ENCODE measurements at regions of chr15 and their contacts with region 1.

Region 1: GRCh38 chr15:43510200-43511011 is 7.0 kb upstream of the MAP1A start:
- DNase-seq: peak; percentile 99
- H3K4me3 Mint-ChIP-seq: peak overlapping the region; percentile 94
- H3K27ac Mint-ChIP-seq: peak overlapping the region; percentile 92
- H3K4me1 Mint-ChIP-seq: peaks cover 60% of the 10 kb centered on the region
- H3K27me3 Mint-ChIP-seq: no peaks in the 10 kb centered on the region

Region 2: GRCh38 chr15:43440721-43441281 is 69.6 kb before region 1 on chr15:
- CTCF ChIA-PET with region 1: interaction called, 74 read pairs
- POLR2A ChIA-PET with region 1: interaction called, 24 read pairs
- DNase-seq: peak; percentile 58
- H3K4me3 Mint-ChIP-seq: no peak overlapping the region
- H3K27ac Mint-ChIP-seq: peak overlapping the region; percentile 89
- H3K4me1 Mint-ChIP-seq: peaks cover 11% of the 10 kb centered on the region
- H3K27me3 Mint-ChIP-seq: no peaks in the 10 kb centered on the region

Region 3: GRCh38 chr15:43492673-43493601 is 17.5 kb before region 1 on chr15 and contains the start of gene TP53BP1:
- CTCF ChIA-PET with region 1: interaction called, 65 read pairs
- POLR2A ChIA-PET with region 1: interaction called, 47 read pairs
- DNase-seq: peak; percentile 97
- H3K4me3 Mint-ChIP-seq: peak within 1 kb of the TSS; percentile 99
- H3K27ac Mint-ChIP-seq: peak within 1 kb of the TSS; percentile 87
- H3K4me1 Mint-ChIP-seq: peaks cover 40% of the 10 kb centered on the region
- H3K27me3 Mint-ChIP-seq: no peaks in the 10 kb centered on the region
- total RNA-seq, gene TP53BP1: 26.6 to 28.1 TPM

Region 4: GRCh38 chr15:43524254-43524845 is 13.9 kb after region 1 on chr15:
- CTCF ChIA-PET with region 1: interaction called, 10 read pairs
- POLR2A ChIA-PET with region 1: interaction called, 7 read pairs
- DNase-seq: no peak
- H3K4me3 Mint-ChIP-seq: no peak overlapping the region
- H3K27ac Mint-ChIP-seq: no peak overlapping the region
- H3K4me1 Mint-ChIP-seq: peaks cover 18% of the 10 kb centered on the region
- H3K27me3 Mint-ChIP-seq: no peaks in the 10 kb centered on the region

Region 5: GRCh38 chr15:43735416-43735815 is 225.0 kb after region 1 on chr15:
- CTCF ChIA-PET with region 1: no interaction called
- POLR2A ChIA-PET with region 1: no interaction called
- DNase-seq: no peak
- H3K4me3 Mint-ChIP-seq: no peak overlapping the region
- H3K27ac Mint-ChIP-seq: no peak overlapping the region
- H3K4me1 Mint-ChIP-seq: peaks cover 7% of the 10 kb centered on the region
- H3K27me3 Mint-ChIP-seq: peaks cover 13% of the 10 kb centered on the region